AG04449 (cell line): ENCODE measurements at regions of chr1 and their contacts with region 1.

Region 1: DNA sequence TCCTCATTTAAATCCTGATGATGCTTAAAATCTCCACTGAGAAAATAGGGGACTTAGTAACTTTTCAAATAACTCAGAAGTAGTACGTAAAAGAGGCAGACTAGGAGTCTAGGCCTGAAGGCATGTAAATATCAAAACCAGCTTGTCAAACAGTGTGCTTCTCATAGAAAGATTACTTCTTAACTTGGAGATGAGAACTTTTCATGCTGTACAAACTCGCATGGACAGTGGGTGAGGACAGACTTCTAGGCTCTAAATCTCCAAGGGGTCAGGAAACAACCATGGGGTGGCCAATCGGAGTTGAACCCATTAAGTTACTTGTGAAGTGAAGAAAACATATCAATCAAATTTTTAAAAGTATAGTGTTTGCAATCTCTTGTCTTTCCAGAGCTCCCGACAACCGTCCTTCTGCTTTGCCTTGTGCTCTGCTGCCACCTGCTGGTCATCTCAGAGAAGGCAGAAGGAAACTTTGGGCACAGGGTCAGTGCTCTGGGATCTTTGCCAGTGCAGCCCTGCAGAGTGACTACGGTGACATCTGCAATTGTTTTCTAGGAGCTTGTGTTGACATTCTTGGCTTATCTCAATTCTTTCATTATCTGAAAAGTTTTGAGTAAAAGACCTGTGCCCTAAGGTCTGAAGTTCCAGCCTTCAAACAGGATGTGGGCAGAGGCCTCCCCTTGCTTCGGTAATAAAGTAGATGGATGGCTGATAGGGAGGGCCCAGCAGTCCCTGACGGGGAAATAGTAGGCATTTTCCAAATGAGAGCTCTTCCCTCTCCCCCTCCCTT is 105.1 kb upstream of the PDE4B start:
- DNase-seq: no peak
- H3K4me3 ChIP-seq: no peak overlapping the region
- CTCF ChIP-seq: peak; percentile 84

Region 2: GRCh38 chr1:64823691-64824476 is 863.7 kb before region 1 on chr1:
- CTCF ChIA-PET with region 1: interaction called, 10 read pairs
- POLR2A ChIA-PET with region 1: no interaction called
- DNase-seq: peak; percentile 16
- H3K4me3 ChIP-seq: no peak overlapping the region; the same call in 1 of the 2 replicates
- CTCF ChIP-seq: peak; percentile 67

Region 3: GRCh38 chr1:65209005-65209885 is 478.4 kb before region 1 on chr1:
- CTCF ChIA-PET with region 1: interaction called, 143 read pairs
- POLR2A ChIA-PET with region 1: no interaction called
- DNase-seq: no peak
- H3K4me3 ChIP-seq: no peak overlapping the region
- CTCF ChIP-seq: peak; percentile 51

Region 4: GRCh38 chr1:65425697-65426096 is 261.9 kb before region 1 on chr1:
- CTCF ChIA-PET with region 1: interaction called, 45 read pairs
- POLR2A ChIA-PET with region 1: no interaction called
- DNase-seq: no peak
- H3K4me3 ChIP-seq: no peak overlapping the region
- CTCF ChIP-seq: no peak

Region 5: DNA sequence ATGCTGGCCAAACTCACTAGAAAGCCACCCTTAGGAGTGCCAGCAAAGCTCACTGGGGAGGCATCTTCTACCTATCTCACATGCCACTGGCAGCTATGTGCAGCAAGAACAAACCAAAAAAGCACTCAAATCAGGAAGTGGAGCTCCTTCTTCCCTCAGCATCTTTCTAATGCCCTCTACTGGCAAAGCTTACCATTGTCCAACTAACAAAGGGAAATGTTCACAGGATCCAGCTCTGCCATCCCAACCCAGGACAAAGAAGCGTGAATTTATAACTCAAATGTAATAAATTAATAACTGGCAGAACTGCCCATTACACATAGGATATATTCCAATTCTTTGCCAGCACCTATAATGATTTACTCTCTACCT is 228.2 kb before region 1 on chr1:
- CTCF ChIA-PET with region 1: interaction called, 11 read pairs
- POLR2A ChIA-PET with region 1: no interaction called
- DNase-seq: no peak
- H3K4me3 ChIP-seq: no peak overlapping the region
- CTCF ChIP-seq: peak; percentile 51

Region 6: DNA sequence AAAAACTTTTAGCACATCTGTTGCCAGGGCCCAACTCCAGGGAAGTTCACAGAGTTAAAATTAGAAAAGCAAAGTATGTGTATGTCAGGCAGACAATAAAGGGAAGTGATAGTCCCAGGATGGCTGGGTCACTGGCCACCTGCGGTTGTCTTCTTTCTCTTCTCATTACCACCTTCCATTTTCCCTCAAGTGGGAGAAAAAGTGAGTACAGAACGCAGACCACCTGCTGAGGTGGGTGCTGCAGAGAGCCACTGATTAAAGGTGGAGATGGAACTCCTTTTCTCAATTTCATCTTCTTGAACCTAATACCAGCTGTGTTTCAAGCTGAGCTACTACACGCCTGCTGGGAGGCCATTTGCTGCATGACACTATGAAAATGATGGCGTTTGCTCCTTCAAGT is 16.2 kb after region 1 on chr1:
- CTCF ChIA-PET with region 1: interaction called, 33 read pairs
- POLR2A ChIA-PET with region 1: no interaction called
- DNase-seq: no peak
- H3K4me3 ChIP-seq: no peak overlapping the region
- CTCF ChIP-seq: no peak